Pancreas (tissue), 10 donors: ENCODE measurements at regions of chr2 and their contacts with region 1.

Region 1: DNA sequence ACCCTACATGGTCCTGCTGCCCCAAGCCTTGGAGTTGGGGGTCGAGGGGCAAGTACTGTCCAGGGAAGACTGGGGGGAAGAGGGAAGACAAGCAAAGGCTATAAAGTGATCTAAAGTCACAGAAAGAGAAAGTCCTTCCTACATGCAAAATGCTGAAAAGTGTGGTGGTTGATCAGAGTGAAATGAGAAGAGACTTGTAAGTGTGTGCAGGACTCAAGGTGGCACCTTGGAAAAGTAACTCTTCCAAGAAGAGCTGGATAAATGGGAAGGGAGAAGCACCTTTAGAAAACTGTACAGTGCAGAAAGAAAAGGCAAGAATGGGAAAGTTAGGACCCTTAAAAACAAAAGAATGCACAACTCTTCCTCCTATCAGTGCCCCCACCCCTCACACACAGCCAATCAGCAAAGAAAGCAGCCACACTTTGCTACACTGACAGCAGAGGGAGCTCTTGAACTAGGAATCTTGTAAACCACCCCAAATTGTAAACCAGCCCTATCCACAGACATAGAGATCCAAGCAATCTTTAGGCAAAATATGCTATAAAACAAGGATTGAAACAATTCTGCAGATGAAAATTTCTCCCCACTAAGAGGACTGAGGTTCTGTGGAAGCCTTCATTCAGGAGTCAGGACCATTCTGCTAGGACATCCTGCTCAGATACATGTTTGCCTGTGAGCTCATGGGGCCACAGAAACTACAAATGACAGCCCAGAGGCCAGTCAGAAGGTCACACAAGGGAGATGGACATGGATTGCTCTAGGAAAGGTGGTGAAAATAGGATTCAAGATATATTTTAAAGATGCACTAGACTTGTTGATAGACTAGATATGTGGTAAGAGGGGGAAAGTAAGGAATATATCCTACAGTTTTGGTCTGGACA is 146.4 kb downstream of the FTCDNL1 start:
- DNase-seq: peak in 1 of 6 donors; percentile 30
- ATAC-seq: peak in 3 of 4 donors; percentile 84 to 92 (median 86)
- H3K4me3 ChIP-seq: no peak overlapping the region
- H3K27ac ChIP-seq: no peak overlapping the region
- H3K4me1 ChIP-seq: no peaks in the 10 kb centered on the region
- H3K27me3 ChIP-seq: no peaks in the 10 kb centered on the region
- CTCF ChIP-seq: peak in 3 of 4 donors; percentile 17 to 39 (median 23)

Region 2: GRCh38 chr2:199596549-199596948 is 108.0 kb before region 1 on chr2:
- intact Hi-C with region 1: no loop called
- DNase-seq: no peak
- ATAC-seq: peak in 2 of 4 donors; percentile 46 to 53
- H3K4me3 ChIP-seq: no peak overlapping the region
- H3K27ac ChIP-seq: no peak overlapping the region
- H3K4me1 ChIP-seq: no peaks in the 10 kb centered on the region
- H3K27me3 ChIP-seq: peaks cover 0 to 6% (median 0%) of the 10 kb centered on the region in 4 donors
- CTCF ChIP-seq: peak in 2 of 4 donors; percentile 15 to 30

Region 3: DNA sequence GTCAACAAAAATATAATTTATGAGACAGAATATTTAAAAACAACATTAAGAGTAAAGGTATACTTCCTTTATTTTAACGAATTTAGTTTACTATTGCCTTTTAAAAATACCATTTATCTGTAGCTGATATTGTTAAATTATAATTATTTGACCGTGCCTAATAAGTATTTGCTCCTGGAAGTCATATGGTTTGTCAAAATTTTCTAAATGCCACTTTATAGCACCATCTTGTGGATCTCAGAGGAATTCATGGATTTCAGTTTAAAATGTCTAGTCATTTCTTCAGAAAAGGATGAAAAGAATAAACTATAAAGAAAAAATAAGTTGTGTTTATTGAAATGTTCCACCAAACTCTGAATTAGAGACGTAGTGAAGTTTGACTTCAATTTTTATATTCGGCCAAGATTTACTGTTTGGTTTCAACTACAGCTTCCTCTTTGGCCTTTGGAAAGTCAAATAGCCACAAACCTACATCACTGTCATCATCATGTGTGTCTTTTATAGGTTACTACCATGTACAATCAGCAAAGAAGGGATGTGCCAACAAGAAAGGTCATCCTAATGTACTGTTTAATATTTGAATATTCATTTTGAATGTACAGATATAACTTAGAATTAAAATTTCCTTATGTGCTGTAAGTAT is 156.7 kb after region 1 on chr2:
- intact Hi-C with region 1: loop called in 1 of 3 experiments (anchors 10 kb)
- DNase-seq: no peak
- ATAC-seq: peak in 3 of 4 donors; percentile 54 to 69 (median 64)
- H3K4me3 ChIP-seq: no peak overlapping the region
- H3K27ac ChIP-seq: no peak overlapping the region
- H3K4me1 ChIP-seq: no peaks in the 10 kb centered on the region
- H3K27me3 ChIP-seq: no peaks in the 10 kb centered on the region
- CTCF ChIP-seq: peak in 3 of 4 donors; percentile 30 to 44 (median 43)

Region 4: DNA sequence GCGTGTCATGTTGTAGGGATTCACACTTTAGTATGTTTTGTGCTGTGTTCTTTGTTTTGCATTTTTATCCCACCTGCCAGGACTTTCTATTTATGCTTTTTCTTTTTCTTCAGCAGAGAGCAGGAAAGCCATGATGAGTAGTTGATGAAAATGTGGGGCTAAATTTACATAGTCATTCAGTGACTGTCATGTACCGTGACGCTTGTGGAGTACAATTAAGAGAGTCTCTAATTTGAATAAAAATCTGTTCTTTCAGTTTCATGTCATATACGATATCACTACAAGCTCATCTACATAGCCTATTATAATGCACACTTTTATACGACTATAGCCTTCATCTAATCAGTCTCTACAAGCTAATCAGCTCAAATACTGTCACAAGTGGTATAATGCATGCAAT is 489.2 kb after region 1 on chr2:
- intact Hi-C with region 1: no loop called
- DNase-seq: no peak
- ATAC-seq: no peak
- H3K4me3 ChIP-seq: no peak overlapping the region
- H3K27ac ChIP-seq: no peak overlapping the region
- H3K4me1 ChIP-seq: no peaks in the 10 kb centered on the region
- H3K27me3 ChIP-seq: no peaks in the 10 kb centered on the region
- CTCF ChIP-seq: no peak